Caco-2 (cell line): ENCODE measurements at regions of chr11 and their contacts with region 1.

Region 1: DNA sequence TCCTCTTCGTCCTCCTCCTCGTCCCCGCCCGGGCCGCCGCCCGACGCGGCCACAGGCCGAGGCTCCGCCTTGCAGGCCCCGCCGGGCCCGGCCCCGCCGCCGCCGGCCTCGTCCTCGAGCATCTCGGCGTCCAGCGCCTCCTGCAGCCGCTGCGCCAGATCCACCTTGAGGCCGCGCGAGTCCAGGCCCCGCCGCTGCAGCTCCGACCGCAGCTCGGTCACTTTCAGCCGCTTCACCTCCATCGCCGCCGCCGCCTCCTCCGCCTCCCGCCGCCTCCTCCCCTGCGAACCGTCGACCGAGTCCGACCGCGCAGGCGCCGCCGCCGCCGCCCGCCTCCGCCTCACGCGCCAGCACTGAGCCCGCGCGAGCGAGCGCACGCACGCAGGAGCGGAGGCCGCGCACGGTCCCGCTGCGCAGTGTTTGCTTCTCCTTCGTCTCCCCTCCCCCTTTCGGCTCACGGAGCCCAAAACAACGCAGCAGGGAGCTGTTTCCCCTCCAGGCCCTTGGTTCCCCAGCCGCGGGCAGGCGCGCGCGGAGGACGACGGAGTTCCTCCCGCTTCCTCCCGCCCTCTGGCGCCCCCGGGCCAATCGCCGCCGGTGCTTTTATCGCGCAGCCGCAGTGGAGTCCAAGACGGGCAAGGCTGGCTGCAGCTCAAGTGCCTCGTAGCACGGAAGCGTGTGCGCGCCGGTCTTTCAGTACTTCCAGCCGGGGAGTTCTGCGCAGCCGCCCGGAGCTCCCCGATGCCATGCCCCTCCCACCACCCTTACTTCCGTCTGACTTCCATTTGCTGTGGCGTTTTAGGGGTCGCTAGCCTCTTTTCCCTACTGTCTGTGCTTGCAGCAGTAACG is at the start of gene HNRNPUL2:
- DNase-seq: peak; percentile 99
- H3K4me3 ChIP-seq: peak within 1 kb of the TSS; percentile 94
- H3K4me3 Mint-ChIP-seq: peak within 1 kb of the TSS; percentile 99
- H3K27ac Mint-ChIP-seq: peak within 1 kb of the TSS; percentile 98
- H3K4me1 ChIP-seq: peaks cover 22% of the 10 kb centered on the region
- H3K4me1 Mint-ChIP-seq: peaks cover 27% of the 10 kb centered on the region
- H3K27me3 ChIP-seq: no peaks in the 10 kb centered on the region
- H3K27me3 Mint-ChIP-seq: no peaks in the 10 kb centered on the region
- CTCF ChIP-seq: no peak
- total RNA-seq, gene HNRNPUL2: 60.0 and 62.9 TPM in 2 replicates

Region 2: GRCh38 chr11:62411524-62411923 is 315.6 kb before region 1 on chr11:
- CTCF ChIA-PET with region 1: no interaction called
- POLR2A ChIA-PET with region 1: no interaction called
- intact Hi-C with region 1: no loop called
- DNase-seq: no peak
- H3K4me3 ChIP-seq: no peak overlapping the region
- H3K4me3 Mint-ChIP-seq: no peak overlapping the region
- H3K27ac Mint-ChIP-seq: no peak overlapping the region
- H3K4me1 ChIP-seq: peaks cover 3% of the 10 kb centered on the region
- H3K4me1 Mint-ChIP-seq: peaks cover 5% of the 10 kb centered on the region
- H3K27me3 ChIP-seq: no peaks in the 10 kb centered on the region
- H3K27me3 Mint-ChIP-seq: no peaks in the 10 kb centered on the region
- CTCF ChIP-seq: no peak

Region 3: GRCh38 chr11:62601394-62602140 is 125.6 kb before region 1 on chr11 and contains the start of gene MTA2:
- CTCF ChIA-PET with region 1: no interaction called
- POLR2A ChIA-PET with region 1: interaction called, 13 read pairs
- intact Hi-C with region 1: no loop called
- DNase-seq: peak; percentile 99 to 100
- H3K4me3 ChIP-seq: peak within 1 kb of the TSS; percentile 97
- H3K4me3 Mint-ChIP-seq: peak within 1 kb of the TSS; percentile 88
- H3K27ac Mint-ChIP-seq: peak within 1 kb of the TSS; percentile 89
- H3K4me1 ChIP-seq: peaks cover 35% of the 10 kb centered on the region
- H3K4me1 Mint-ChIP-seq: peaks cover 36% of the 10 kb centered on the region
- H3K27me3 ChIP-seq: no peaks in the 10 kb centered on the region
- H3K27me3 Mint-ChIP-seq: no peaks in the 10 kb centered on the region
- CTCF ChIP-seq: no peak
- total RNA-seq, gene MTA2: 134 and 135 TPM in 2 replicates

Region 4: DNA sequence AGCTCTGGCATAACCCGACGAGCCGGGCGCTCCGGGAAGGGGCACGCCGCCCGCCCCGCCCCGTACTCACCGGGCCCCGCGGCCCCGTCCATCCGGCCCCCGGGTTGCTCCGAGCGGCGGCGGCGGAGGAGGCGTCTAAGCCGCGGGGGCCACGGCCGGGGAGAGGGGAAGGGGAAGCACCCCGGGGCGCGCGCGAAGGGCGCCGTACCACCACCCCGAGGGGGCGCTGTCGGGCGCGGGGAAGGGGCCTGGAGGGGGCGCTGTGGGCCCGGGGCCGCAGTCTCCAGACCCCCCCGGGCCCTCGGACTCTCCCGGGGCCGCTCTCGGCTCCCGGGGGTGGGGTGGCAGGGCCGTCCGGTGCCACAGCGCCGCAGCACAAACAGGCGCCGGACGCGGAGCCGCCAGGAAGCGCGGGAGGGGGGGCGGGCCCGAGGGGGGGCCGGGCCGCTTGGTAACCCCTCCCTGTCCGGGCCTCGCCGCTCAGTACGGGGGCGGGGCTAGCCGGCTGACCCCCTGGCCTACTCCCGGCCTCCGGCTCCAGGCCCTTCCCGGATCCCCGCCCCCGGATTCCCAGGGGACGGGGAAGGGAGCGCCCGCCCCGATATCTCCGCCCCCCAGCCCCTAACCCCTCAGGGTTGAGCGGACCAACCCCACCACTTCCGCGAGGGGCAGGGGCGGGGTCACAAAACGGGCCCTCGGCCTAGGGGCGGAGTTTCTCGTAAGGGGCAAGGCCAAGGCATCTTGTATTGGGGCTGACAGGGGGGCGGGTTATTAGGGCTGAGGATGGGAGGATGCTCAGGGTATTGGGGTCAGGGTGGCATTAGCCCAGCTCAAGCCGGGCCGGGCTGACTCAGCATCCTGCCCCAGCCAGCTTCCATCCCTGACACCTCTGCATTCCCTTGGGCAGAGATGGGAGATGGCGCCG is 114.5 kb before region 1 on chr11 and contains the starts of genes EML3 and ROM1:
- CTCF ChIA-PET with region 1: no interaction called
- POLR2A ChIA-PET with region 1: no interaction called
- intact Hi-C with region 1: no loop called
- DNase-seq: peak; percentile 93
- H3K4me3 ChIP-seq: peak within 1 kb of the TSS; percentile 87
- H3K4me3 Mint-ChIP-seq: peak within 1 kb of the TSS; percentile 97
- H3K27ac Mint-ChIP-seq: peak within 1 kb of the TSS; percentile 93
- H3K4me1 ChIP-seq: peaks cover 30% of the 10 kb centered on the region
- H3K4me1 Mint-ChIP-seq: peaks cover 33% of the 10 kb centered on the region
- H3K27me3 ChIP-seq: no peaks in the 10 kb centered on the region
- H3K27me3 Mint-ChIP-seq: no peaks in the 10 kb centered on the region
- CTCF ChIP-seq: peak; percentile 99
- total RNA-seq, gene EML3: 61.2 and 68.7 TPM in 2 replicates
- total RNA-seq, gene ROM1: 1.1 and 1.3 TPM in 2 replicates

Region 5: GRCh38 chr11:62678770-62679696 is 48.1 kb before region 1 on chr11 and contains the start of gene UBXN1:
- CTCF ChIA-PET with region 1: no interaction called
- POLR2A ChIA-PET with region 1: interaction called, 11 read pairs
- intact Hi-C with region 1: loop called (anchors 1 kb)
- DNase-seq: peak; percentile 87 to 88
- H3K4me3 ChIP-seq: peak within 1 kb of the TSS; percentile 95
- H3K4me3 Mint-ChIP-seq: peak within 1 kb of the TSS; percentile 81
- H3K27ac Mint-ChIP-seq: peak within 1 kb of the TSS; percentile 91
- H3K4me1 ChIP-seq: no peaks in the 10 kb centered on the region; the same call in 1 of the 2 replicates
- H3K4me1 Mint-ChIP-seq: peaks cover 15% of the 10 kb centered on the region
- H3K27me3 ChIP-seq: no peaks in the 10 kb centered on the region
- H3K27me3 Mint-ChIP-seq: no peaks in the 10 kb centered on the region
- CTCF ChIP-seq: no peak
- total RNA-seq, gene UBXN1: 116 and 118 TPM in 2 replicates

Region 6: GRCh38 chr11:62753736-62754603 is 26.8 kb after region 1 on chr11 and contains the start of gene ZBTB3:
- CTCF ChIA-PET with region 1: interaction called, 21 read pairs
- POLR2A ChIA-PET with region 1: interaction called, 71 read pairs
- intact Hi-C with region 1: loop called (anchors 2 kb)
- DNase-seq: peak; percentile 98 to 99
- H3K4me3 ChIP-seq: peak within 1 kb of the TSS; percentile 56
- H3K4me3 Mint-ChIP-seq: peak within 1 kb of the TSS; percentile 97
- H3K27ac Mint-ChIP-seq: peak within 1 kb of the TSS; percentile 95
- H3K4me1 ChIP-seq: peaks cover 9% of the 10 kb centered on the region; the same call in 1 of the 2 replicates
- H3K4me1 Mint-ChIP-seq: no peaks in the 10 kb centered on the region
- H3K27me3 ChIP-seq: no peaks in the 10 kb centered on the region
- H3K27me3 Mint-ChIP-seq: no peaks in the 10 kb centered on the region
- CTCF ChIP-seq: no peak
- total RNA-seq, gene ZBTB3: 8.2 and 10.9 TPM in 2 replicates

Region 7: GRCh38 chr11:62831520-62832335 is 104.6 kb after region 1 on chr11 and contains the start of gene STX5:
- CTCF ChIA-PET with region 1: no interaction called
- POLR2A ChIA-PET with region 1: interaction called, 13 read pairs
- intact Hi-C with region 1: no loop called
- DNase-seq: peak; percentile 99
- H3K4me3 ChIP-seq: peak within 1 kb of the TSS; percentile 66
- H3K4me3 Mint-ChIP-seq: peak within 1 kb of the TSS; percentile 90
- H3K27ac Mint-ChIP-seq: peak within 1 kb of the TSS; percentile 100
- H3K4me1 ChIP-seq: no peaks in the 10 kb centered on the region
- H3K4me1 Mint-ChIP-seq: peaks cover 5% of the 10 kb centered on the region
- H3K27me3 ChIP-seq: no peaks in the 10 kb centered on the region
- H3K27me3 Mint-ChIP-seq: no peaks in the 10 kb centered on the region
- CTCF ChIP-seq: no peak
- total RNA-seq, gene STX5: 39.9 and 44.2 TPM in 2 replicates

Region 8: GRCh38 chr11:64028398-64029115 is 1301.4 kb after region 1 on chr11:
- CTCF ChIA-PET with region 1: no interaction called
- POLR2A ChIA-PET with region 1: interaction called, 13 read pairs
- intact Hi-C with region 1: no loop called
- DNase-seq: no peak
- H3K4me3 ChIP-seq: no peak overlapping the region
- H3K4me3 Mint-ChIP-seq: no peak overlapping the region
- H3K27ac Mint-ChIP-seq: no peak overlapping the region
- H3K4me1 ChIP-seq: no peaks in the 10 kb centered on the region
- H3K4me1 Mint-ChIP-seq: no peaks in the 10 kb centered on the region
- H3K27me3 ChIP-seq: no peaks in the 10 kb centered on the region
- H3K27me3 Mint-ChIP-seq: no peaks in the 10 kb centered on the region
- CTCF ChIP-seq: no peak